GM18951 (cell line): ENCODE measurements at regions of chr2 and their contacts with region 1.

Region 1: DNA sequence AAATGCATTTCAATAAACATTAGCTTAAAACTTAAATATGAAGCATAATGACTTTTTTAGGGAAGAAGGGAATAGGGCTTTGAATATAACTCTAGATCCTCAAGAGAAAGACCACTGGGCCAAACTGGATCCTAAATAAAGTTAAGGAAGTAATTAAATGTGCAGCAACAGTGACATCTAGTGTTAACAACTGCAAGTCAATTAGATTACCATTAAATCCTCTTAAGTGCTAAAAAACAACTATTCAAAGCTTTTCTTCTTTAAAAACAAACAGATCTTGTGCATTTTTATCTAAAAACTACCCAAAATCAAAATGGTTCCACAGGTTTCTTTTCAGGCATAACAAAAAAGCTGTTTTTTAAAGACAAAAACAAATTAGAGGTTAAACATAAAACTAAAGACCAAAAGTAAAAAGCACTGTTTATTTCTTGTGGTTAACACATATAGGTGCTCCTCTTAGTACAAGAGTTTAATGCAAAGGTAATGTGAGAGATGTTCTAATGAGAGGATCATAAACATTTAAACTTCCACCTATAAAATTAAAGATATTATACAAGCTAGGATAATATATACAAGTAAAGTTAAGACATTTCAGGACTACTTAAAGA is 111.4 kb downstream of the THADA start:
- POLR2A ChIP-seq: no peak

Region 2: DNA sequence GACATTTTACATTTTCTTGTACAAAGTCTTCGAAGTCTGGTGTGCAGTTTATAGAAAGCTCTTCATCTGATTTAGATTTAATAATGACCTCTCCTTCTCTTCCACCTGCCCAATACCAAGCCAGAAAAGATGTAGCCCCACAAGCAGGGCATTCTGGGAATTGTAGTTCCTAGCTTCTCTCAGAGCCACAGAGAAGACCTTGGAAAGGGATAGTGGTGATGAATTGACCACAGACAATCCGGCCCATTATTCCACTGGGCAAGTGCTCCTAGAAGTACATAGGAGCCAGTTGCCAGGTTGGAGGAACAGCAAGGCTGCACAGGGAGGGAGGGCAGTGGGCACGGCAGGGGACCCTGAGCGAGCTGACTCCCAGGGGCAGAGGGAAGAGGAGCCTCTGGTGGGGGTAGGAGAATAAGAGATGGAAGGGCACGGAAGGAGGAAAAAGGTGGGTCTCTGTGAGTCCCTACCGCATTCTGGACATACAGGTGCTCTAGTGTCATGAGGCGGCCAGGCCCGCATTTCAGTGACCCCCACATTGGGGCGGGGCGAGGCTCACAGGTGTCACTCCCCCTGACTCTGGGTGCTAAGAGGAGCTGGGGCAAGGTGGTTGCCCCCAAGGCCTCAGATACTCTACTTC is 539.5 kb before region 1 on chr2:
- in situ Hi-C with region 1: loop called (anchors 5 kb)
- POLR2A ChIP-seq: no peak

Region 3: DNA sequence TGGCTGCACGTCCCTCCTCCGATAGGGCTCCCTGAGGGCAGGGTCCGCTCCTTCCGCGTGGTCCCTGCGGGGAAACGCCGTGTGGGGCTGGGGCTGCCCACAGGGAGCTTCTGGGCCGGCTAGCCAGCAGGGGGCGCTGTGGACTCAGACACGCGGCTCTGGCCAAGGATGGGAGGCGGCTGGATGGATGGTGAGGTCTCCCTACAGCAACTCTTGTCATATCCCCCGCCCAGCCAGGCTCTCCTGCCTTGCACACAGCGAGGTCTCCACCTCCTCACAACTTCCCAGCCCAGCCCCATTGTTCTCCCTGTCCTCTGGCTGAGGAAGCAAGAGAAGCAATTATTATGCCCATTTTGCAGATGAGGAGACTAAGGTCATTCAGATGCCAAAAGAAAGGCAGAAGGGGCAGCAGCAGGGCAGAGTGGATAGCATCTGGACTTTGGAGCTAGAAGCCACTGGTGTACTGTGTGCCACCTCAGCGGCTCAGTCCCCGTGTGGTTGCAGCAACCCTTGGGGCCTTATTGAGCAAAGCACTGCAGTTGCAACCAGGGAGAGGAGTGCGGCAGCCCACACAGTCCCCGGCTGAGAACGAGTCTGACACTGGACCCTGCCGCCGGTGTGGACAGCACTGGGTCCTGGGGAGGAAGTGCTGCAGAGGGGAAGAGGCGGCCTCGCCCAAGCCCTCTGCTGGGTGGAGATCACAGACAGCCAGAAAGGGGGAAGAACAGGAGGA is 357.1 kb before region 1 on chr2:
- in situ Hi-C with region 1: loop called (anchors 10 kb)
- POLR2A ChIP-seq: no peak

Region 4: DNA sequence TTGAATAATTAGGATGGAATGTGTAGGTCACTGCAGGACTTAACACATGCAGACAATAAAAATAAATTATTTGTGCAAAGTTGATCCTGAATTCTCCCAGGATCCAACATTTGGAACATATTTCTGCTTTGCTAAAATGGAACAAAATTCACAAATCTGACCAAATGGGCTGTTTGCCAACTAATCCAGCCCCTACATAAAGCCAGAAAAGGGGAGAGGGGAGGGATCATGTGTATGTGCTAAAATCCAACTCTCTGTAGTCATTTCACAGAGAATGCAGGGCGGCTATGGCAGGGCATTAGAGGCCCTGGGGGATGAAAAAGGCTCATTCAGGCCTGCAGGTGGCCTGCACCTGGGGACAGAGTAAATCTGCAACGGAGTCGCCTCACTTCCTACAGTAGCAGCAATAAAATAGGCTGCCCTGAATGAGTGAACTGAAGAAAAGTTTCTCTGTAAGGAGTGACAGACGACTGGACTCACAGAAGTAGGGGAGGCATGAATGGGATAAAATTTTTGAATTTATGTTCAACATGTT is 254.0 kb before region 1 on chr2:
- in situ Hi-C with region 1: loop called (anchors 5 kb)
- POLR2A ChIP-seq: no peak